ENCODE measurements at regions of chr12 and their contacts with region 1.

Region 1: DNA sequence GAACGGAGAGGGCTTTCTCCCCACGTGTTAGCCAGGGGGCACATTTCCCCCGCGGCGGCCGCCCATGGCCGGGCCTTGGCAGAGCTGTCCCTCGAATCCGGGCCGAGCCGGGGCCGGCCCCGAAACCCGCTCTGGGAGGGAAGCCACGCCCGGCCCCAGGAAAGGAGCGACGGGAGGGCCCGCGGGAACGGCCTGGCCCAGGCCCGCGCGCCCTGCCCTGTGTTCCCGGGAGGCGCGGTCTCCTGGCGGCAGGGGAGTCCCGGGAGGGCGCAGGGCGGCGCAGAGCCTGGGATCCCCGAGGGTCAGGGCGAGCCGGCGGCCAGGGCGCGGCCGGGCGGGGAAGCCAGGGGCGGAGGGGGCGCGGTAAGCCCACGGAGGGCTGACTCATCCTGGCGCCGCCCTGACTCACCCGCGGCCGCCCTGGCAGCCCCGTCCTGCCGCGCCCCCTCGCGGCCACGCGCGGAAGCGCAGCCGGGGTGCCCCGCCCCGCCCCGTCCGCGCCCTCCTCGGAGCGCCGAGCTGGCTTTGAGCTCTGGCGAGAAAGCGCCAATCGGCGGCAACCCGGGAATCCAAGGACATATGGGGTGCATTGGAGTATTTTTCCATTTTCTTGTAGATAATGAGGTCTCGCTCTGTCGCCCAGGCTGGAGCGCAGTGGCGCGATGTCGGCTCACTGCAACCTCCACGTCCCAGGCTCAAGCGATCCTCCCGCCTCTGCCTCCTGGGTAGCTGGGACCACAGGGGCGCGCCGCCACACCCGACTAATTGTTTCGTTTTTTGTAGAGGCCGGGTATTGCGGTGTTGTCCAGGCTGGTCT is 31.8 kb upstream of the PLEKHG6 start:
- DNase-seq: peak; percentile 89
- H3K4me3 ChIP-seq: peak overlapping the region; percentile 34
- H3K27ac ChIP-seq: peak overlapping the region; percentile 81
- H3K4me1 ChIP-seq: peaks cover 16% of the 10 kb centered on the region
- H3K27me3 ChIP-seq: no peaks in the 10 kb centered on the region
- CTCF ChIP-seq: peak; percentile 76

Region 2: DNA sequence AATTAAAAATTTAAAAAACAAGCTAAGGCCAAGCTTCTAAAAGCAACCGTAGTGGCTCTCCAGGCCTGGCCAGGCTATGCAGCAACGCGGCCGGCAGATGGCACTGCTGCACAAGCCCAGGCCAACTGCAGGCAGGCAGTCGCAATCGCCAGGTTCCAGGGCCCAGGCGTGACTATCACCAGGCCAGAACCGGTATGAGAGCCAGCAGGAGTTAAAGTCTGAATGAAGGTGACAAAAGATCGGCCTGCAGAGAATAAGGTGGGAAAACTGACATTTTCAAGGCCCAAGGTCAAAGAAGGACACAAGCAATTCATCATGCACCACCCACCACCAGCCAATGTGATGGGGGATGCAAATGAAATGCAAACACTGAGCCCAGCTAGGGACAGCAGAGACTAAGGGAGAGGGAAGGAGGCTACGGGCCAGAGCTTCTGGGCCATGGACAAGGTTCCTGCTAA is 290.0 kb before region 1 on chr12:
- intact Hi-C with region 1: loop called (anchors 5 kb)
- DNase-seq: peak; percentile 69
- H3K4me3 ChIP-seq: no peak overlapping the region
- H3K27ac ChIP-seq: no peak overlapping the region
- H3K4me1 ChIP-seq: no peaks in the 10 kb centered on the region
- H3K27me3 ChIP-seq: no peaks in the 10 kb centered on the region
- CTCF ChIP-seq: peak; percentile 94

Region 3: DNA sequence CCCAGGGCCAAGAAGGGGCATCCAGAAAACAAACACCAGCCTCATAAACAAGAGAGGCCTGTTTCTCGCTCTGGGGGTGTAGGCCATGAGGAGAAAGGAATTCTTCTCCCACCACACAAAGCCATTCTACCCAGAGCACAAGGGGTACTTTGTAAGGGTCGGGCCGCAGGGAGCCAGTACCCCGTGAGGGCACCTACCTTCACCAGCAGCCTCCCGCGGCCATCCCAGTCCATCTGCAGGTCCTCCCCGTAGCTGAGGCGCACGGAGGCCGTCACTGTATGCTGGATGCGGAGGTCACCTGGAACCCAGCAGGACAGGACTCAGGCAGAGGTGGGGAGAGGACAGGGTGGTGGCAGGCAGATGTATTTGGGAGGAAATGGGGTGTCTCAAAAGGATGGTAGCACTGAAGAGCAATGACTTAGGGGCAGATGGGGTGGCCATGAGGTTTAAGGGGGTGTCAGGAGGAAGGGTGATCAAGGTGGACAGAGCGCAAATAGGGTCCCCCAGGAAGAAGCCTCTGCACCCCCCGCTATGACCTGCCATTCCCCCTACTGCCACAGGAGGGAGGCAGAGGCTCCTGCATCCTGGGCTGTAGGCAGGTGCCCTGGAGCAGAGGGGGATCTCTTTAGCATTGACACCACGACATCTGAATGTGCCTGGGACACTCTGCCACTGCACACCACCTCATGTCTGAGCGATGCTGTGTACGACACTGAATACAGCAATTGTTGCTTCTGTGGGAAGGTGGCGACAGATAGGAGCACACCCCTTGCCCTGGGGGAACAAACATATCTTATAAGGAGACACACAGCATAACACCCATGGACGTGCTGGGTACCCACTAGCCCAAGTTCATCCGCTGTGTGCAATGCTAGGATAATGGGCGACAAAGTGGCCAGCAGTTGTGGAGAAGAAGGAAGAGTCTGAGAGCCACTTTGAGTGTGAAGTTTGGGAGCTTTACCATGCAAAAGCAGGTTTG is 215.6 kb before region 1 on chr12:
- intact Hi-C with region 1: loop called (anchors 2 kb)
- DNase-seq: peak; percentile 48
- H3K4me3 ChIP-seq: no peak overlapping the region
- H3K27ac ChIP-seq: no peak overlapping the region
- H3K4me1 ChIP-seq: no peaks in the 10 kb centered on the region
- H3K27me3 ChIP-seq: no peaks in the 10 kb centered on the region
- CTCF ChIP-seq: peak; percentile 97

Region 4: DNA sequence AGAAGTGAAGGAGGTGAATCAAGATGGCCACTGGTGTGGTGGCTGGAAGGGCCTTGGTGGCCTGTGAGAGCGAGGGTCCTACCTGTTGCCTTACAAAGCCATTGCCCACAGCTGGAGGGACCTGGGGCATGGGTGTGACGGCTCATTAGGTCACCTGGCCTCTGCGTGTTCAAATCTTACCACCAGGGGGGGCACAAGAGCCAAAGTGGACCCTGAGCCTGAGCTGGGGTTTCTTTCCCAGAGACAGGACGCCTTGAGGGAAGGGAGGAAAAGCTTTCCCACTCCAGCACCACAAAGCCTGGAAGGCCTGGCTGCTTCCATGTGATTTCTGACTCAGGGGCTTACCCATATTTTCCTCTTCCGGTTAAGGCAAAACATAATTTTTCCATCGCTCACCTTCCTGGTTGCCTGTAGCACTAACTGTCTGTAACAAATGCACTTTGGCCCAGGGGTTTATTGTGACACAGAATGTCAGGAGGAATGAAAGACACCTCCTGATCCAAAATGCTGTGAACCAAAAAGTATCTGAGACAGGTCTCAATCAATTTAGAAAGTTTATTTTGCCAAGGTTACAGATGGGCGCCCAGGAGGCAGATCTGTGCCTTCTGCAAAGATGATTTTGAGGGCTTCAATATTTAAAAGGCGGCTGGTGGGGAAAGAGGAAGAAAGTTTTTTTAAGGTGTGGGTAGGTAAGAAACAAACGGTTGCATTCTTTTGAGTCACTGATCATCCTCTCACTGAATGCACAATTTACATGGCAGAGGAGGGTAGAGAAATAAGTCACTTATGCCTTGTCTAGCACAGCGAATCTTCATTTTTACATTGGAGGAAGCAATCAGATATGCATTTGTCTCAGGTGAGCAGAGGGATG is 82.7 kb before region 1 on chr12:
- intact Hi-C with region 1: loop called (anchors 2 kb)
- DNase-seq: peak; percentile 96
- H3K4me3 ChIP-seq: no peak overlapping the region
- H3K27ac ChIP-seq: peak overlapping the region; percentile 64
- H3K4me1 ChIP-seq: peaks cover 10% of the 10 kb centered on the region
- H3K27me3 ChIP-seq: no peaks in the 10 kb centered on the region
- CTCF ChIP-seq: peak; percentile 88

Region 5: GRCh38 chr12:6230321-6231110 is 48.1 kb before region 1 on chr12:
- intact Hi-C with region 1: loop called (anchors 5 kb)
- DNase-seq: peak; percentile 68
- H3K4me3 ChIP-seq: no peak overlapping the region
- H3K27ac ChIP-seq: peak overlapping the region; percentile 92
- H3K4me1 ChIP-seq: peaks cover 80% of the 10 kb centered on the region
- H3K27me3 ChIP-seq: no peaks in the 10 kb centered on the region
- CTCF ChIP-seq: no peak

Region 6: DNA sequence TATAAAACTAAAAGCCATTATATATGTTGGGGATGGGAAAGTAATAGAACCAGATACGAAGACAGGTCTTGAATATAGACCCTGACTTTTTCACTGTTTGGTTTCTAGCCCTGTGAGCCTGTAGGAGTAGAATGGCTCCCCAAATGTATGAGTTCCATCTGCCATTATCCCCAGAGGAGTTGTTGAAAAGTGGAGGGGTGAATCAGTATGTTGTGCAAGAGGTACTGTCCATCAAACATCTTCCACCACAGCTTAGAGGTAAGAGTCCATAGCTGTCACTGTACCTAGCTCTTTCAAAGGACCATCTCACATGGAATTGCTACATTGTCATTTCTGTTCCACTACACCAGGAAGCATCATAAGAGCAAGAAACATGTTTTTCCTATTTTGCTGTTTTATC is 216.3 kb after region 1 on chr12:
- intact Hi-C with region 1: no loop called
- DNase-seq: no peak
- H3K4me3 ChIP-seq: peak overlapping the region; percentile 76
- H3K27ac ChIP-seq: no peak overlapping the region
- H3K4me1 ChIP-seq: peaks cover 3% of the 10 kb centered on the region
- H3K27me3 ChIP-seq: no peaks in the 10 kb centered on the region
- CTCF ChIP-seq: no peak

Region 7: DNA sequence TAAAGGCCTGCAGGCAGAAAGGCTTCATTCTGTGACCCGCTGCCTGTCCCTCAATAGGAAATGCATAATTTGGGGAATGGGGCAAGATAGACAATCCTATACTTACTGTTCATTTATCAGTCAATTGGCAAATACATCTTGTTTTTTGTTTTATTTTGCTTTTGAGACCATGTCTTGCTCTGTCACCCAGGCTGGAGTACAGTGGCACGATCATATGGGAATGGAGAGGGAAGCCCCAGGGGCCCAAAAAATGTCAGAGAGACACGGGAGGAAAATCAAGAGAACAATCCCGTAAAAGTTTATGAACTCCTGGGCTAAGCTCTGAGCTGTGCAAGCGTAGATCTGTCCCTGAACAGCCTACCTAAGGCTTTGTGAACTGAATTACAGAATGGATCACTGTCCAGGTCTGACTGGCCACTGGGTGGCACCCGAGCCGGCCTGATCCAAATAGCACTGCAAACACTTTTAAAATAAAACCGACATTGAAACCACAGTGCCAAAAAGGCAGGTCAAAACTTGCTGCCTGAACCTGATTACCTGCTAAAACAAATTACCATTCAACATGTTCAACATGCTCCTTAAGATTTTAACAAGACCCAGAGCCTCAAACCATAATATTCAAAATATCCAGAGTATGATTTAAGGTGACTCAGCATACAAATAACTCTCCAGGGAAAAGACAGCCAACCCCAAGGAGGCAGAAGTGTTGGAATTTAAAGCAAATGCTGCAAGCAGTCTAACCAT is 457.0 kb after region 1 on chr12:
- intact Hi-C with region 1: no loop called
- DNase-seq: peak; percentile 70
- H3K4me3 ChIP-seq: no peak overlapping the region
- H3K27ac ChIP-seq: no peak overlapping the region
- H3K4me1 ChIP-seq: no peaks in the 10 kb centered on the region
- H3K27me3 ChIP-seq: no peaks in the 10 kb centered on the region
- CTCF ChIP-seq: peak; percentile 72

Measured in colonic mucosa (tissue), 4 donors.